ENCODE measurements at regions of chr19 and their contacts with region 1.

Region 1: DNA sequence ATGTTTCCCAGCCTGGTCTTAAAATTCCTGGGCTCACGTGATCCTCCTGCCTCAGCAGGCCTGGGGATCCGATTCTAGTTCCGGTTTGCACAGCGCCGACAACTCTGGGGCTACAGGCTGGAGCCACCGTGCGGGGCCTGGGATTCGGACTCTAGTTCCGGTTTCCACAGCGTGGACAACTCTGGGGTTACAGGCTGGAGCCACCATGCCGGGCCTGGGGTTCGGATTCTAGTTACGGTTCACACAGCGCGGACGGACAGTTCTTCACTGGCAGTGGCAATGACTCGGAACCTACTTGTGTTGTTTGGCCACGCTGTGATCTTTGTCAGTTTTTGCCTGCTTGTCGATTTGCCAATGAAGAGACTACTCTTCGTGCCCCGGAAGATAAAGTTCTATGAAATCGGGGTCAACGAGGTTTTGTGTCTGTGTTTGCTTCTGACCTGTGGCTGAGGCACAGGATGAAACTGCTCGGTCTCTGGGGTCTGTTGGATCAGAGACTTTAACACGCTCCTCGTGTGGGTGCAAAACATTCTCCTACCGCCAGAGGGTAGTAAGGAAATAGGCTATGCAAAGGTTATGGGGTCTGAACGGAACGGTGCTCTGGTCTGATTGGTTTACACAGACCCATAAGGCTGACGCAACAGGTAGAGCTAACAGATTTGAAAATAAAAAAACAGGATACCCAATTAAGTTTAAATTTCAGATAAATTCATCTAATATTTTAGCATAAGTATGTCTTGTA is 12.1 kb upstream of the ZSCAN1 start:
- DNase-seq: no peak
- ATAC-seq: peak; percentile 75 to 81 (median 78)
- H3K4me3 ChIP-seq: no peak overlapping the region
- H3K27ac ChIP-seq: no peak overlapping the region
- H3K4me1 ChIP-seq: no peaks in the 10 kb centered on the region
- H3K27me3 ChIP-seq: no peaks in the 10 kb centered on the region
- CTCF ChIP-seq: peak; percentile 37 to 47 (median 40)
- POLR2A ChIP-seq: no peak

Region 2: GRCh38 chr19:58154679-58155648 is 133.3 kb after region 1 on chr19:
- intact Hi-C with region 1: loop called in 1 of 2 experiments (anchors 5 kb)
- DNase-seq: peak; percentile 96 to 97 (median 97)
- ATAC-seq: peak; percentile 94
- H3K4me3 ChIP-seq: peak overlapping the region; percentile 97 to 100 (median 98)
- H3K27ac ChIP-seq: peak overlapping the region; percentile 71 to 88 (median 84)
- H3K4me1 ChIP-seq: peaks cover 0 to 14% (median 2%) of the 10 kb centered on the region in 4 donors
- H3K27me3 ChIP-seq: no peaks in the 10 kb centered on the region
- CTCF ChIP-seq: peak; percentile 91 to 99 (median 94)
- POLR2A ChIP-seq: peak; percentile 79

Measured in right lobe of liver (tissue), 6 donors.